Activated CD4-positive, alpha-beta memory T cell treated with anti-CD3 and anti-CD28 coated beads for 36 hours (primary cell): ENCODE measurements at regions of chr12 and their contacts with region 1.

Region 1: DNA sequence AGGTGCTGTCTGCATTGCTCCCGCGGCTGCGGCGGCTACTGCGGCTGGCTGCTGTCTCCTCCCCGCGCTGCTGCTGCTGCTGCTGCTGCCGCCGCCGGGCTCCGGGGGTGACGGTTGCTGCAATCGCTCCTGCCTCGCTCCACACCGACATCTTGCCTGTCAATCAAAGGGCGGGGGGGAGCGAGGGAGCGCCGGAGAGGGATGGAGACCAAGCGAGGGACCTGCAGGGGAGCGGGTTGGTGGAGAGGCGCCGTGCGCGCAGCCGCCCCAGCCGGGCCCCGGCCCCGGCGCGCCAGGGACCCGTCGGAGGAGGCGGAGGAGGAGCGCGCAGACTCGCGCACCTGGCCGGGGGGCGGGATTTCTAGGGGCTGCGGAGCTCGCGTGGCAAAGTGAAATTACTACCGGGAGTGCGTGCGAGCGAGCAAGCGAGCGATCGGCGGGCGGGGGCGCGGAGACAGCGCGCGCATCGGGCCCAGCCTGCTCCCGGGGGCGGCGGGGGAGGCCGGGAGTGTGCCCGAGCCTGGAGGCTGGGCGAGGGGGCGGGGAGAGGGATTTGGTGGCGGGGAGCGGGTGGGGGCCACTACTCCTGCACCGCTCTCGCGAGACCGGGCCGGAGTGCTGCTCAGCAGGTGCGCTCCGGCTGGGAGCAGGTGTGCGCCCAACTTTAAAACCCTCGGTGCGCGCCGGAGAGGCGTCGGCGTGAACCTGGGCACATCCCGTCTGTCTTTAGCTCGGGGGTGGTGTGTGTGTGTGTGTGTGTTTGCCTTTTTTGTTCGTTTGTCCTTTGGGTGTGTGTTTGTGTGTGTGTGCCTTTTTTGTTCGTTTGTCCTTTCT is at the start of gene KSR2:
- DNase-seq: peak; percentile 70
- H3K4me3 Mint-ChIP-seq: peak within 1 kb of the TSS; percentile 80
- H3K27ac Mint-ChIP-seq: no peak within 1 kb of the TSS
- H3K4me1 Mint-ChIP-seq: peaks cover 8% of the 10 kb centered on the region
- H3K27me3 Mint-ChIP-seq: peaks cover 52% of the 10 kb centered on the region
- total RNA-seq, gene KSR2: 0.12 to 0.45 TPM

Region 2: DNA sequence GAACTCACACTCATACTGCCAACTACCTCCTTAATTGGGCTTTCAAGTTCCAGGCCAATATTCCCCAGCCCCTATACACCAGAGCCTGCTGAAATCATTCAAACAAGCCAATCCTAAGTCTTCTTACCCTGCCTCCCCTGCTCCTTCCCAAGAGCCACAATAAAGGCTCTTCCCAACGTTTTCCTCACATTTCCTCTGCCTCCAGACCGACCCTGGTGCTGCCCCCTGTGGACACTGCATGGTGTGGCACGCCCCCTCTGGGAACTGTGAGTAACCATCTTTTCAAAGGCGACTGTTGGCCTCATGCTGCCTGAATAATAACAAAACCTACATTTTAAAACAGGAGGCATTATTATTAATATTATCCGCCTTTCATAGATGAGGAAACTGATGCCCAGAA is 496.1 kb before region 1 on chr12:
- CTCF ChIA-PET with region 1: no interaction called
- POLR2A ChIA-PET with region 1: no interaction called
- intact Hi-C with region 1: no loop called
- DNase-seq: no peak
- H3K4me3 Mint-ChIP-seq: no peak overlapping the region
- H3K27ac Mint-ChIP-seq: no peak overlapping the region
- H3K4me1 Mint-ChIP-seq: no peaks in the 10 kb centered on the region
- H3K27me3 Mint-ChIP-seq: no peaks in the 10 kb centered on the region

Region 3: GRCh38 chr12:118016424-118017264 is 47.6 kb after region 1 on chr12 and contains the start of gene RFC5:
- CTCF ChIA-PET with region 1: no interaction called
- POLR2A ChIA-PET with region 1: interaction called, 3 read pairs
- intact Hi-C with region 1: loop called (anchors 1 kb)
- DNase-seq: peak; percentile 98
- H3K4me3 Mint-ChIP-seq: peak within 1 kb of the TSS; percentile 94
- H3K27ac Mint-ChIP-seq: peak within 1 kb of the TSS; percentile 82
- H3K4me1 Mint-ChIP-seq: peaks cover 28% of the 10 kb centered on the region
- H3K27me3 Mint-ChIP-seq: peaks cover 2% of the 10 kb centered on the region
- total RNA-seq, gene RFC5: 65.8 to 70.8 TPM